Mucosa of descending colon (tissue), 3 donors: ENCODE measurements at regions of chr15 and their contacts with region 1.

Region 1: GRCh38 chr15:80776420-80777045 is 2.6 kb upstream of the CEMIP start:
- DNase-seq: peak in 2 of 3 donors; percentile 68 to 91
- ATAC-seq: peak; percentile 65
- H3K4me3 ChIP-seq: no peak overlapping the region
- H3K4me1 ChIP-seq: peaks cover 19% of the 10 kb centered on the region
- CTCF ChIP-seq: peak; percentile 48

Region 2: DNA sequence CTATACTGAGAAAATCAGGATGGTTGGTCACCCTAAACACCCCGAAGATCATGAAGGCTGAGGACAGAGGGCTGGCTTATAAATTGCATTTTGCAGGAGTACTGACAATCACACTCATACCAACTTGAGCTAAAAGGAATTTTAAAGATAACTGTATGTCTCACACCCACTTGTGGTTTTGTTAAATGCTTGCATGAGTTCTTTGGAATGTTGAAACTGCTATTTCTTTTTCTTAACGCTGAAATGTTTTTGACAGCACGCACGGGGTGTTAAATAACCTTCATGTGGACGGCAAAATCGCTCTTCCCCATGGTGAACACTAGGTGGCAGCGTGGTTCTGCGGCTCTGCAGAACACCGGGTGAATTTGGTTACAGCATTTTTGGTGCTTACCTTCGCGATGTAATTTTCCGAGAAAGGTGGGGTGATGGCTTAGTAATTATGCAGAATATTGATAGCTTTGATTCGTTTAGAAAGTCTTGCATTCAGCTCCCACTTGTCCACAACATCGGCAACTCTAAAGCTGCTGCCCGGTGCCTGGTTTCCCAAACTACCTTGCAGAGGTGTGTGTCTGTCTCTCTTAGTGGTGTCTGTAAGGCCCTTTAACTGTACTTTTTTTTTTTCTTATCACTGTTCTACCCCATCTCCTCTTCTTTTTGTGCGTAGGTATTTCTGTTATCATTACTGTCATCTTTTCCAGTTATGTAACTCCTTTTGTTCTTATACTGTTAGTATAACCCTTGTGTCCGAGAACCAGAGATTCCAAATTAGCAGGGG is 320.7 kb before region 1 on chr15:
- intact Hi-C with region 1: loop called in 1 of 2 experiments (anchors 5 kb)
- DNase-seq: peak in 2 of 3 donors; percentile 48 to 58
- ATAC-seq: peak; percentile 85
- H3K4me3 ChIP-seq: no peak overlapping the region
- H3K4me1 ChIP-seq: no peaks in the 10 kb centered on the region
- CTCF ChIP-seq: peak; percentile 79

Region 3: GRCh38 chr15:80567721-80568157 is 208.8 kb before region 1 on chr15:
- intact Hi-C with region 1: loop called (anchors 5 kb)
- DNase-seq: peak in 1 of 3 donors; percentile 80
- ATAC-seq: peak; percentile 83
- H3K4me3 ChIP-seq: no peak overlapping the region
- H3K4me1 ChIP-seq: no peaks in the 10 kb centered on the region
- CTCF ChIP-seq: peak; percentile 39

Region 4: DNA sequence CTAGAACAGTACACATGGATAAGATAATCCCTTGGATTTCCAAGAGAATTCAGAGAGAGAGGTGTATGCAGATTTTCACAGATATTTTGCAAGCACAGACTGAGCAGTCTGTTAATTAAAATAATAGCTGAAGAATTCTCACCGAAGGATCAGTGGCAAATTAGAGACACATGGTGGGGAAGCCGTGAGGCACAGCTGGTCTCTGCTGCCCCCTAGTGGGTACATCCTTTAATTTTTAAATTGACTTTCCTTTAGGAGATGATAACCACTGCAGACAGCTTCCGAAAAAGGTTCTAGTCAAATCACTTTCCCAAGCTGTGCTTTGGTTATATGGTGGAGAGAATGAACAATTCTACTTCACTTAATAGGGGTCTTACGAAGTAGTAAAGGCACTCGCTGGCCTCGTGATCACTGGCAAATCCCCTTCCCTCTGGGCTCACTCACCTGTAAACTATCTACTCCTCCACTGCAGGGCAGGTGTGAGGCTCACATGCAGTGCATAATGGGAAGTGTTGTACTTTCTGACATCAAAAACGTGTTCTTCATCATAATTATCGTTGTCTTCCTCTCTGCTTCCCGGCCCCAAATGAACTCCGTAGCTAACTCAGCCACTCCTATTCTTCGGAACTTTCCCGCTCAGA is 193.6 kb after region 1 on chr15:
- intact Hi-C with region 1: loop called (anchors 5 to 10 kb)
- DNase-seq: peak in 2 of 3 donors; percentile 41 to 86
- ATAC-seq: peak; percentile 87
- H3K4me3 ChIP-seq: no peak overlapping the region
- H3K4me1 ChIP-seq: no peaks in the 10 kb centered on the region
- CTCF ChIP-seq: peak; percentile 51

Region 5: GRCh38 chr15:81253846-81254245 is 477.3 kb after region 1 on chr15:
- intact Hi-C with region 1: no loop called
- DNase-seq: no peak
- ATAC-seq: no peak
- H3K4me3 ChIP-seq: no peak overlapping the region
- H3K4me1 ChIP-seq: no peaks in the 10 kb centered on the region
- CTCF ChIP-seq: no peak